ENCODE measurements at regions of chr1 and their contacts with region 1.

Region 1: DNA sequence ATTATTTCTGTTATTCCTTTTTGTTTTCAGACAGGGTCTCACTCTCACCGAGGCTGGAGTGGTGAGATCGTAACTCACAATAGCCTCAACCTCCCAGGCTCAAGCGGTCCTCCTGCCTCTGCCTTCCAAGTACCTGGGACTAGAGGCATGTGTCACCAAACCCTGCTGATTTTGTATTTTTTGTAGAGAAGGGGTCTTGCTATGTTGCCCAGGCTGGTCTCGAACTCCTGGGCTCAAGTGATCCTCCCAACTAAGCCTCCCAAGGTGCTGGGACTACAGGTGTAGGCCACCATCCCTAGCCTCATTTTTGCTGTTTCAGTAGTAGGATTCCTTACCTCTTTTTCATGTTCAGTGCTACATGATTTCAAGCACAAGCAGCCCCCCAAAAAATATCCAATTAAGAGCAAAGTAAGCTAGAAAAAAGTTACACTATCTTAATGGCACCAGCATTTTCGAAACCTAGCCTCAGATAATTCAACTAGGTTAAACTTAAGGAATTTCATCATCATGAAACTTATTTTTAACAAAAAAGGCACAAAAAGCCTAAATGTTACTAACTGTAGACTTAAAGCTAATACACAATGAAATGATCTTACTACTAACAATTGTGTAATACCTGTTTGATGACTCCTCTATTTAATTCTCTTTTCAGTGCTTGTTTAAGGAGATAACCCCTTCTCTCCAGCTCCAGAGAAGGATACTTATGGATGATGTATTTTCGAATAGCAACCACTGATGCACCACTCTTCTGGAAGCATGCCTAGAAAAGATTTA is 16.6 kb downstream of the HP1BP3 start:
- DNase-seq: no peak
- H3K4me3 ChIP-seq: no peak overlapping the region
- H3K27ac ChIP-seq: no peak overlapping the region
- H3K4me1 ChIP-seq: no peaks in the 10 kb centered on the region
- H3K27me3 ChIP-seq: no peaks in the 10 kb centered on the region
- CTCF ChIP-seq: no peak
- EP300 ChIP-seq: no peak
- RAD21 ChIP-seq: no peak

Region 2: DNA sequence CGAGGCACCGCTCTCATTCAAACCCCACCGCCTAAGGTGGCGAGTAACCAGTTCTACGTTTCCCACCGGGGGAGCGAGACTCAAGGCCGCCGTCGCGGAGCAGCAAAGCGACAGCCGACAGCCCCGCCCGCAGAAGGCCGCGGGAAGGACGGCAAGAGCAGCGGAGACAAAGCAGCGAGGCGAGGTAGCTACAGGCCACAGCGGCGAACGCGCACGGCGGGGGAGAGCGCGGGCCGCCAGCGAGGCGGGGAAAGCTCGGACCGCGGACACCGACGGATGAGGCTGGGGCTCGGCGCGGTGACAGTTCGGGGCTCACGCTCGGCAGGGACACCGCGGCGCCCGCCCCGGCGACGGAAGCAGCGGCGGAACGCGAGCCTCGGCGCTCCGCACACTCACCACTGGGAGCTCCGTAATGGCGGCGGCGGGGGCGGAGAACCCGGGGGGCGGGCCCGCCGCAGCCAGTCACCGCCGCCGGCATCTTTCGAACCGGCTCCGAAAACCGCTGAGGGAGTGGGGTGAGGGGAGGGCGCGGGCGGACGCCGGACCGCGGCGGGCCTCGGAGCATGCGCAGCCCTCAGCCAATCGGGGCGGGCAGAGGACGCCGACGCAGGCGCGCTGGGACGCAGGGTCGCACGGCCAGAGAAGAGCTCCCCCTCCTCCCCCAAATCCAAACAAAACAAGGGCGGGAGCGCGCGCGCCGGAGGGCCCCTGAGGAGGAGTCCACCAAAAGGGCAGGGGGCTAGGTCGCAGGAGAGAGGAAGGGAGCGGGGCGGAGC is 15.9 kb after region 1 on chr1:
- CTCF ChIA-PET with region 1: interaction called, 6 read pairs
- POLR2A ChIA-PET with region 1: interaction called, 10 read pairs
- DNase-seq: peak; percentile 98
- H3K4me3 ChIP-seq: peak overlapping the region; percentile 72 to 95
- H3K27ac ChIP-seq: peak overlapping the region; percentile 87 to 96
- H3K4me1 ChIP-seq: peaks cover 3 to 6% of the 10 kb centered on the region in 2 experiments; a peak in 2 of 4 replicates
- H3K27me3 ChIP-seq: no peaks in the 10 kb centered on the region
- CTCF ChIP-seq: no peak
- EP300 ChIP-seq: no peak
- RAD21 ChIP-seq: no peak